Activated T-helper 1 cell treated with anti-CD3 and anti-CD28 coated beads, Interleukin-12 subunit alpha, Interleukin-12 subunit beta, Interleukin-2, Interleukin-4 antibody, amounts not matched to agents 30 ng/mL and 10 ng/mL and 1 ng/mL, durations not matched to agents 14 hours and 24 hours and 36 hours (primary cell): ENCODE measurements at regions of chr3 and their contacts with region 1.

Region 1: DNA sequence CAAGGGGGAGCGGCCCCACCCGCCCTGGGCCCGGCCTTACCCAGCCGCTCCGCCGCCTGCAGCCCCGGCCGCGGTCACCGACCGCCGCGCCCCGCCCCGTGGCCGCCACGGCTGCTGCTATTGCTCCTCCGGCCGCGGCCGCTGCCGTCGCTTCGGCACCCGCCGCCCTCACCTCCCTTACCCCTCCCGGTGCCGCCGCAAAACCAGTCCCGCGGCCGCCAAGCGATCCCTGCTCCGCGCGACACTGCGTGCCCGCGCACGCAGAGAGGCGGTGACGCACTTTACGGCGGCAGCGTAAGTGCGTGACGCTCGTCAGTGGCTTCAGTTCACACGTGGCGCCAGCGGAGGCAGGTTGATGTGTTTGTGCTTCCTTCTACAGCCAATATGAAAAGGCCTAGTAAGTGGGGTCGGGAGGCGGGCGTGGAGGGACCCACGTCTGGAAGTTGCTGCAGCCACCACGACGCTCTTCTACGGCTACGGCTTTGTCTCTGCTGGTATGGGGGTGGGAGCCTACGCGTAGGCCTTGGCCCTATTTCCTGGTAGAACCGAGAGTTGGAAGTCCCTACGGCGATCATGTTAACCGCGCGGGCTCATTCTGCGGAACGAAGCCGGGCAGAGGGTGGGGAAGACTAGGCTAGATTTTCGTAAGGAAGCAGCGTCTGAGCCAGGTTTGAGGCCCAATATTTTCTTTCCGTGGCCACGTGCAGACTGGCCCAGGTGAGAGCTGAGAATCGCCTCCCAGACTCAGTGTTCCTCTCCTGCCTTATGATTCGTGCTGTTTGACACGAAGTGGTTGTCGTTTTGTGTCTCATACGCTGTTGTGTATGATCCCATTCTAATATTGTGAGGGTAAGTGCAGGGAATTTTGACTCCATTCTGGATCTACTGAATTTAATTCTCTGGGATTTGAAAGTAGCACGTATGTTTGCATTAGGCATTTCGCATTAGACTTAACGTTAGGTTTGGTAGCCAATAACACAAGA is at the starts of genes GNL3 and PBRM1:
- DNase-seq: peak; percentile 93
- H3K4me3 Mint-ChIP-seq: peak within 1 kb of the TSS; percentile 98
- H3K27ac Mint-ChIP-seq: peak within 1 kb of the TSS; percentile 99
- H3K4me1 Mint-ChIP-seq: peaks cover 75% of the 10 kb centered on the region
- H3K27me3 Mint-ChIP-seq: no peaks in the 10 kb centered on the region
- total RNA-seq, gene GNL3: 241 and 245 TPM in 2 replicates
- total RNA-seq, gene PBRM1: 68.6 and 68.8 TPM in 2 replicates

Region 2: DNA sequence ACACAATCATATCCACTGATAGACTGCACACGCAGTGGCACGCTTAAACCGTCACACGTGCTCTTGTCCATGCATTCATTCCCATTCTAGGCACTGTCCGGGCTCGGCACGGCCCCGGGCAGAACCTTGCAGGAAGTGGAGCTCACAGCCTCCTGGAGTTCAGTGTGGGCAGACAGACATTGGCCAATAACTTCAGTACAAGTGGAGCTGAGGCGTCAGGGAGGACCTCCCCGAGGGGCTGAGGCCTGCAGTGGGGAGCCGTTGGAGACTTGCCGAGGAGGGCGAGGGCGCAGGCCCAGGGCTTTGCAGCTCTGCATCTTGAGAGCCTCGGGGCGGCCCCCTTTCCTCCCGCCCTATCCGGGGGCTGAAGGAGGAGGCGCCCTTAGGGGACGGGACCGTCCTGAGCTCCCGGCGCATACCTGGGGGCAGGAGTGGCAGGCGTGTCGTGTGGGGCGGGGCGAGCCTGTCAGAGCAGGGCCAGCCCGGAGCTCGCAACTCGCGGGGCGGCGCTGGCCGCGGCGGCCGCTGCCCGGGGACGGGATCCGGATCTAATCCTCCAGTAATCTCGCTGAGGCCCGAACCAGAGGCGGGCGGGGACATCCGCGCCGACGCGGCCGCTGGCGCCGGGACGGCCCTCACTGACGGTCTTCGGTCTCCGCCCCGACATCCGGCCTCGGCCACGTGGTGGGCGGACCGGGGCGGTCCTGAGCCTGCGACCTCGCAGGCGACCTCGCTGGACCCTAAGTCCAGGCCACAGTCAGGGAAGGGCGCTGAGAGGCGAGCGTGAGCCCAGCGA is 703.0 kb before region 1 on chr3 and contains the start of gene ACY1:
- intact Hi-C with region 1: loop called (anchors 10 kb)
- DNase-seq: peak; percentile 79
- H3K4me3 Mint-ChIP-seq: peak within 1 kb of the TSS; percentile 97
- H3K27ac Mint-ChIP-seq: peak within 1 kb of the TSS; percentile 97
- H3K4me1 Mint-ChIP-seq: peaks cover 30% of the 10 kb centered on the region
- H3K27me3 Mint-ChIP-seq: no peaks in the 10 kb centered on the region
- total RNA-seq, gene ACY1: 58.0 and 58.5 TPM in 2 replicates

Region 3: GRCh38 chr3:52278510-52279069 is 407.4 kb before region 1 on chr3 and contains the start of gene WDR82:
- intact Hi-C with region 1: loop called (anchors 10 kb)
- DNase-seq: peak; percentile 95
- H3K4me3 Mint-ChIP-seq: peak within 1 kb of the TSS; percentile 97
- H3K27ac Mint-ChIP-seq: peak within 1 kb of the TSS; percentile 99
- H3K4me1 Mint-ChIP-seq: peaks cover 70% of the 10 kb centered on the region
- H3K27me3 Mint-ChIP-seq: no peaks in the 10 kb centered on the region
- total RNA-seq, gene WDR82: 105 and 107 TPM in 2 replicates

Region 4: DNA sequence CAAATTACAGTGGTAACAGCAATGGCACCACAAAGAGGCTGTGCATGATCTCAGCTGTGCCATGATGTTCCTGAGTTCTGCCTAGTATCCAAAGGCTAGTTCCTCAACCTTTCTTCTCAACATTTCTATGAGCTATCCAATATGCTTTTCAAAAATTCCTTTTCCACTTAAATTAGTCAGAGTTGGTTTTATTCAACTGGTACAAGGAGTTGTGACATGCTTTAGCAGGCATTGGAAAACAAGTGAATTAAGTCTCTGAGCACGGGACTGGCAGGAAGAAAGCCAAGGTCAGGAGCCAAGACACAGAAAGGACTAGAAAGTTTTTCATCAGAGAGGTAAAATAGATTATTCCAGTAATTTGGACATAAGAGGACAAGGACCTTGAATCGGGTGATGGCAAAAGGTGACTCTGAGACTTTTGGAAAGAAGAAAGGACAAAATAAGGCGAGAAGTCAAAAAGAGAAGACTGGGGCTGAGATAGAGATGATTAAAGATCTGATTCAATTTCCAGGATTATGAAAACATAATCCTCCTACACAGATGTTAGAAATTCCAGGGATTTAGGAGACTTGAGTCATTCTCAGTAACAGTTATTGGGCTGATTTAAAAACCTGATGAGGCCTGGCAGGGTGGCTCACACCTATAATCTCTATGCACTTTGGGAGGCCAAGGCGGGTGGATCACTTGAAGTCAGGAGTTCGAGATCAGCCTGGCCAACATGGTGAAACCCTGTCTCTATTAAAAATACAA is 36.4 kb before region 1 on chr3:
- intact Hi-C with region 1: no loop called
- DNase-seq: no peak
- H3K4me3 Mint-ChIP-seq: no peak overlapping the region
- H3K27ac Mint-ChIP-seq: no peak overlapping the region
- H3K4me1 Mint-ChIP-seq: peaks cover 13% of the 10 kb centered on the region
- H3K27me3 Mint-ChIP-seq: no peaks in the 10 kb centered on the region

Region 5: GRCh38 chr3:52670621-52671521 is 15.1 kb before region 1 on chr3:
- intact Hi-C with region 1: loop called (anchors 1 kb)
- DNase-seq: peak; percentile 39
- H3K4me3 Mint-ChIP-seq: peak overlapping the region; percentile 64
- H3K27ac Mint-ChIP-seq: peak overlapping the region; percentile 98
- H3K4me1 Mint-ChIP-seq: peaks cover 33% of the 10 kb centered on the region
- H3K27me3 Mint-ChIP-seq: no peaks in the 10 kb centered on the region

Region 6: DNA sequence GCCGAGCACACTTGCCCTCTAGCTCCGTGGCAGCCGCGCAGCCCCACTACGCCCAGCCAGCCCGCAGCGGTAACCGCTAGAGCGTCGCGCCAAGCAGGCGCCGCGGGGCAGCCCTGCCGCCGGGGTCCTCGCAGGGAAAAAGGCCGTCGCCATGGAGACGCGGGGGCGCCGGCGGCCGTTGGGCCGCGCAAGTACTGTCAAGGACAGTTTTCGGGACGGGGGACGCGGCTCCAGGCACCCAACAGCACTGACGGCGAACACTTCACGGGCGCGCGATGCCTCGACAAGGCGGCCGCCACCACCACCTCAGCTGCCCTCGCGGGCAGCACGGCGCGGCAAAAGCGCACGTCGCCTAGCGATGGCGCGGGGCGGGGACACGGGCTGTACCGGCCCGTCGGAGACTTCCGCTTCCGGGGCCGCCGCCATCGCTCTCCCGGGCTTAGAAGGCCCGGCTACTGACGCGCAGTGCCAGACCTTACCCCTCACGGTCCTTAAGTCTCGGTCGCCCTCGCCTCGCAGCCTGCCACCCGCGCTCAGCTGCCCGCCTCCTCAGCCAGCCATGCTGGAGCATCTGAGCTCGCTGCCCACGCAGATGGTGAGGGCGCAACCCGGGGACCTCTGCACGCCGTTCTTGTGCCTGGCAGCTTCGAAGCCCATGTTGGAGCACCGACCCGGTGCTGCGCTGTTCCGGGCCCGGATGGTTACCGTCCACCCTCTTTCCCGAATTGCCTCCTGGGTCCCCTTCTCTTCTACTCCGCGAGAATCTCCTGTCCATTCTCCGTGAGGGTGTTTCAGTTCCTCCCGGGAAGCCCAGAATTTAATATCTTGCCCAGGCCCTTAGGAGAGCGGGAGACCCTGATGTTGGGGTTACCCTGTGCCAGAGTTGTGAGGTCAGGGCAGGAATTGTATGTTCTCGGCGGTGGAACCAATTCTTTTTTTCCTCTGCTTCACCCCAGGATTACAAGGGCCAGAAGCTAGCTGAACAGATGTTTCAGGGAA is 20.0 kb after region 1 on chr3 and contains the starts of genes GLT8D1 and SPCS1:
- intact Hi-C with region 1: loop called (anchors 1 kb)
- DNase-seq: peak; percentile 82
- H3K4me3 Mint-ChIP-seq: peak within 1 kb of the TSS; percentile 99
- H3K27ac Mint-ChIP-seq: peak within 1 kb of the TSS; percentile 94
- H3K4me1 Mint-ChIP-seq: peaks cover 33% of the 10 kb centered on the region
- H3K27me3 Mint-ChIP-seq: no peaks in the 10 kb centered on the region
- total RNA-seq, gene GLT8D1: 33.9 and 40.6 TPM in 2 replicates
- total RNA-seq, gene SPCS1: 122 and 132 TPM in 2 replicates

Region 7: GRCh38 chr3:52770496-52771333 is 84.7 kb after region 1 on chr3 and contains the start of gene NEK4:
- intact Hi-C with region 1: loop called (anchors 1 kb)
- DNase-seq: peak; percentile 84
- H3K4me3 Mint-ChIP-seq: peak within 1 kb of the TSS; percentile 94
- H3K27ac Mint-ChIP-seq: peak within 1 kb of the TSS; percentile 96
- H3K4me1 Mint-ChIP-seq: peaks cover 22% of the 10 kb centered on the region
- H3K27me3 Mint-ChIP-seq: peaks cover 4% of the 10 kb centered on the region
- total RNA-seq, gene NEK4: 27.8 and 32.9 TPM in 2 replicates